GM10248 (cell line): ENCODE measurements at regions of chr4 and their contacts with region 1.

Region 1: DNA sequence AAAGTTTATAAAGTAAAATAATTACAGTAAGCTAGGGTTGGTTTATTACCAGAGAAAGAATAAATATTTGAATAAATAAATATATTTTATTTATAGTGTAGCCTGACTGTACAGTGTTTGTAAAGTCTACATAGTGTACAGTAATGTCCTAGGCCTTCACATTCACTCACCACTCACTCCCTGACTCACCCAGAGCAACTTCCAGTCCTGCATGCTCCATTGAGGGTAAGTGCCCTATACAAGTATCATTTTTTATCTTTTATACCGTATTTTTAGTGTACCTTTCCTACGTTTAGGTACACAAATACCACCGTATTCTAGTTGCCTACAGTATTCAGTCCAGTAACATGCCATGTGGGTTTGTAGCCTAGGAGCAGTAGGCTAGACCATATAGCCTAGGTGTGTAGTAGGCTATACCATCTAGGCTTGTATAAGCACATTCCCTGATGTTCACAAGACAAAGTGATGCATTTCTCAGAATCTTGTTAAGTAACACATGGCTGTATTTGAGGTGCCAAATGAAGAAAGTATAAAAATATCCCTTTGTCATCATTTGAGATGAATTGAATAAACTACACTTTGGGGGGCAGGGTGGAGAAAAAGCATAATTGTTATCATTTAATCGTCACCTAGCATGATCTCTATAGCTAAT is 14.7 kb upstream of the KLHL8 start:
- DNase-seq: no peak
- CTCF ChIP-seq: no peak

Region 2: DNA sequence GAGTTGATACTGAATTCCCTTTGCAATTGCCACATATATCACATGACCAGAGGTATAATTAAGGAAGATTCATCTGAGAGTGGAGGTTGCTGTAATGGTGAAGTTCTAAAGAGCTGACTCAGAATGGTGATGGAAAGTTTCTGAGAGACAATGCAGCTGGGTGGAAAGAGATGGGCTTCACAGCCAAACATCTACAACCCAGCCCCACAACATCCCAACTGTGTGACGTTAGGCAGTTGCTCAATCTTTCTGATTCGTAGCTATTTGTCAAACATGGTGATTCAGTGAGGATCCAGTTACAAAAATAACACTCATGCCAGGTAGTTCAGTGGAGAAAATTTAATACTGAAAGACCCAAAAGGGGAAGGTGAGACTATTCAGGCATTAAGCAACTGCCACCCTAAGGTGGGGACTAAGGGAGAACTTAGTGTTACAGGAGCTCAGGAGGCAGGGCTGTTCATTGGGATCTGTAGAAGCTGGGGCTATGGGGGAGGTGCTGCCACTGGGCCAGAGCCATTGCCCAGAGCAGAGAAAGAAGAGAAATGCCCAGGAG is 307.2 kb before region 1 on chr4:
- CTCF ChIA-PET with region 1: interaction called, 20 read pairs
- POLR2A ChIA-PET with region 1: no interaction called
- DNase-seq: no peak
- CTCF ChIP-seq: no peak

Region 3: DNA sequence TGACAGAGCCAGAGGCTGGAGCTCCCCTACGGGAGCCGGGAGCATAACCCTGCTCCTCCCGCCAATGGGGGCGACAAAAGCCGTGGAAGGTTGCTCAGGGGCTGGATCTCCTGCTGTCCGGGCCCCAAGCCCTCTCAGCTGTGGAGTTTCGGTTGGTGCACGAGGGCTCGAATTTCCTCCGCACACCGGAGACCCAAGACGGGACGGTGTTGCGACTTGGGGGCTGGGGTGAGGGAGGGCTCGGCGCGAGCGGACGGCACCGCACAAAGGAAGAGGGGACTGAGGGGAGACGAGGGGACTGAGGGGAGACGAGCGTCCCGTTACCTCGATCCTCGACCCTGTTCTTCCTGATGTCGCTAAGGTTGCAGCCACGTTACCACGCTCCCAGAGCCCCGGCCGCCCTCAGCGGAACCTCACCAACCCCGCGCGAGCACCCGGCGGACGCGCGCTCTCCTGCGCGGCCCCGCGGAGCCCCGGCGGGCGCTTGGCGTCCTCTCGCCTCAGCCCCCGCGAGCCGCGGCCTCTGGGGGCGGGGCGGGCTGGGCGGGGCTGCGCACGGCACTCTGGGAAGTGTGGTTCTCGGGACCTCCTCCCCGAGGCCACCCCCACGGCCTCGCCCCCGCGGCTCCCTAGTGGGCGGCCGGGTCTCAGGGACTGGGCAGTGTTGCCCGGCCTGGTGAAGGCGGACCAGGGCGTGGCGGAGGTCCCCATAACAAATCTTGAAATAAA is 14.9 kb before region 1 on chr4 and contains the start of gene KLHL8:
- CTCF ChIA-PET with region 1: interaction called, 25 read pairs
- POLR2A ChIA-PET with region 1: no interaction called
- DNase-seq: peak; percentile 96
- CTCF ChIP-seq: no peak

Region 4: GRCh38 chr4:87390891-87391575 is 155.9 kb after region 1 on chr4 and contains the start of gene HSD17B11:
- CTCF ChIA-PET with region 1: no interaction called
- POLR2A ChIA-PET with region 1: no interaction called
- DNase-seq: peak; percentile 94
- CTCF ChIP-seq: no peak